AG04449 (cell line): ENCODE measurements at regions of chr18 and their contacts with region 1.

Region 1: DNA sequence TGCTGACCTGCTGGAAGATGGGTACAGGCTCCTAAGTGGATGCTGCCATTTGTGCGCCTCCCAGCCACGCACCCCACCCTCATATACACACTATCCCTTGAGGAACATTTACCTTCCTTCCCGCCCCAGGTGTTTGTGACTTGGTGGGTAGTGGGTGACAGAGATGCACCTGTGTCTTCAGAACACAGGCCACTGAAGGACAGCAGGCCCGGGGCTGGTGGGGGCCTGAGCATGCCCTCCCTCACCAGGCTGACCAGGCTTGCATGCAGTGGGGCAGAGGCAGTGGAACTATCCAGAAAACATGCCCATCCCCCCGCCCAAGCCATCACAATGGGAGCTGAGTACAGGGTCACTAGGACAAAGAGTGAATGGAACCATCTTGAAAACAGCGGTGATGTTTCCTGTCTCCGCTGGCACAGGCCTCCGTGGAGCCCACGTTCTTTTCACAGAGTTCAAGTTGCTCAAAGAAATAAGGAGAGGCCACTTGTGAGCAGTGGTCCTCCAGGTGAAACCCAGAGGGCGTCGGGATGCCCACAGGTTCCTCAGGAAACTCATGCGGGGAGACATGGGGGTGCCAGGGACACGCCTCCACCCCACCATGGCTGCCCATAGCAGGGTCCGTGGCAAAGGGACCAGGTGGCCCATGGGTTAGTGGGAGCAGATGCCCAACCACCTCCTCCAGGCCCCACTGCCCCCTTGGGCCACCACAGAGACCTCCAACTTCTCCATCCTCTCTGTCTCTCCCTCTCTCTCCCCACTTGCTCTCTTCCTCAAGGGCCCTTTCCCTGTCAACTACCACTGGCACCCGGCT is 90.9 kb downstream of the MALT1 start:
- DNase-seq: no peak
- H3K4me3 ChIP-seq: no peak overlapping the region
- CTCF ChIP-seq: no peak

Region 2: DNA sequence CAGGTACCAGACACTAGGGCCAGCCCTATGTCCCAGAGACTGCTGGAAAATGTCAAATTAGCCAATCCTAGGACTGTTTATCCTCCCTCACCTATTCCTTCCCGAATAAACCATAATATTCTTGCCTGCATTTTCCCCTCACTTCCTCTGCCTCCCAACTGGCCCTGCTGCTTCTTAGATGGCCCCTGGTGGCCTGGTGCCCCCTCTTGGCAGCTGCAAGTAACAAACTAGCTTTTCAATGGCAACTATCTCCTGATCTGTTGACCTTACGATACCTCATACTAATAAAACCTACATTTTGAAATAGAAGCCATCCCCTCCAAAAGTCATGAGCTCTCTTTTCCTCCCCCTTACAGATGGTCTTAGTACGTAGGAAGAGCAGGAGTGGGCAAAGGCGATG is 265.2 kb before region 1 on chr18:
- CTCF ChIA-PET with region 1: interaction called, 40 read pairs
- POLR2A ChIA-PET with region 1: no interaction called
- DNase-seq: no peak
- H3K4me3 ChIP-seq: no peak overlapping the region
- CTCF ChIP-seq: peak; percentile 10

Region 3: GRCh38 chr18:58515175-58515775 is 246.9 kb before region 1 on chr18:
- CTCF ChIA-PET with region 1: interaction called, 22 read pairs
- POLR2A ChIA-PET with region 1: no interaction called
- DNase-seq: no peak
- H3K4me3 ChIP-seq: no peak overlapping the region
- CTCF ChIP-seq: no peak

Region 4: GRCh38 chr18:58520969-58521368 is 241.2 kb before region 1 on chr18:
- CTCF ChIA-PET with region 1: interaction called, 168 read pairs
- POLR2A ChIA-PET with region 1: no interaction called
- DNase-seq: no peak
- H3K4me3 ChIP-seq: no peak overlapping the region
- CTCF ChIP-seq: no peak

Region 5: DNA sequence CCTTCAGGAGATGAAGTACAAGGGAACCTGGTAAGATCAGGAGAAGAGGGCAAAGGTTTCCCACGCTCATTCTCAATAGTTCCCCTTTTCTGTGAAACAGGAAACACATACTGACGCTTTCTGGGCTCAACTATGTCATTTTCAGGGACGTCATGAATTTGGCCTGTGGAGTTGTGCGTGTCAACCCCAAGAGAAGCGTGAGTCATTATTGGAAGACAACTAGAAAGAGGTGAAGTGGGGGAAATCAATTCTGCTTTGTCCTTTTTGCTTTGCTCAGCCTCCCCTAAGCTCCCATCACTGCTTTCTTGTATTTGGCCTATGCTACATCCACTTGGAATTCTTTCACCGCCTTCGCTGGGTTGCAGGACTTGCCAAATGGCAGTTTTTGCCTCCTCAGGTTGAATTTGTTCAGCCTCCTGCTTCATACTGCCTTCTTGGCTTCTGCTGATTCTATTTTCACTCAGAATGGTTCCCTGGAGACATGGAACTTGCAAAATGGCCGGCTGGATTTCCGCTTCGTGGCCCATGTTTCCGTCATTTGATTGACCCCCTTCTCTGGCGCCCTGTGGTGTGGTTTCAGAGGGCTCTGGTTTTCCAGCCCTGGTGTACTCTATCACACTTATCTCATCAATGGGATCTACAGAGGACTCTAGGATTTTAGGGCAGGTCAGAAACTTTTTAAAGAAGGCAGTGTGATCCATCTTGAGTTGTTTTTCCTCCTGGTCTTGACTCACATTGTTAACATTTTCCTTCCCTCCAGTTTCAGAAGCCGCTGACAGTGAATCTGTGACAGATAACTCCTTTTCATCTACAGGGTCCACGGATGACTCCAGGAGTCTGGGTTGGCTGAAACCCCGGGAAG is 226.6 kb before region 1 on chr18:
- CTCF ChIA-PET with region 1: interaction called, 168 read pairs
- POLR2A ChIA-PET with region 1: no interaction called
- DNase-seq: no peak
- H3K4me3 ChIP-seq: no peak overlapping the region
- CTCF ChIP-seq: no peak

Region 6: DNA sequence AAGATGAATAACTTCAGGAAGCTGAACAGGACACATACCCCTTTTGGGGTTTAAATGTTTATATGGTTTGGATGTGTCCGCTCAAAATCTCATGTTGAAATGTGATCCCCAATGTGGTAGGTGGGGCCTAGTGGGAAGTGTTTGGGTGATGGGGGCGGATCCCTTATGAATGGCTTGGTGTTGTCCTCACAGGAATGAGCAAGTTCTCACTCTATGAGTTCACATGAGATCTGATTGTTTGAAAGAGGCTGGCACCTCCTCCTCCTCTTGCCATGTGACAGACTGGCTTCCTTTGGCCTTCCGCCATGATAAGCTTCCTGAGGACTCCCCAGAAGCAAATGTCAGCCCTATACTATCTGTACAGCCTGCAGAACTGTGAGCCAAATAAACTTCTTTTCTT is 13.9 kb after region 1 on chr18:
- CTCF ChIA-PET with region 1: interaction called, 28 read pairs
- POLR2A ChIA-PET with region 1: no interaction called
- DNase-seq: no peak
- H3K4me3 ChIP-seq: no peak overlapping the region
- CTCF ChIP-seq: no peak